Activated B cell treated with CpG ODN at 0.5 μM for 24 hours (primary cell): ENCODE measurements at regions of chr3 and their contacts with region 1.

Region 1: DNA sequence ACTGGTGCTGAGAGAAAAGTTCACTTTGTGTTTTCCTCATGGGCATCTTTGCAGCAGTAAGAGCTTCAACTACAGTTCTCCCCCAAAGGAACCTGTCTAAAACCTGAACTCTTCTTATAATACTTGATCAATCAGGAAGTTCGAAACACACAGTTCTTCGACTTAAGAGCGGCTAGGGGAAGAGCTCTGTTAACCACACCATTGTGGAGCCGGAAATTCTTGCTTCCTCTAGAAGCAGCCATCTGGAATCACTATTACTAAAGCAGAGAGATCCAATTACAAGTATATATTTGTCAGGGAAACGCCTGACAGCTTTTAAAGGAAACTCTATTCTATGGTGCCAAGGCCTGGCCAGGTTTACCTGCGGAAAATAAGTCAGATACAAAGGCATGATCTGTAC is 337.3 kb upstream of the CBLB start:
- DNase-seq: no peak
- ATAC-seq: peak; percentile 78
- H3K4me3 Mint-ChIP-seq: peak overlapping the region; percentile 25
- H3K27ac Mint-ChIP-seq: no peak overlapping the region
- H3K4me1 Mint-ChIP-seq: peaks cover 33% of the 10 kb centered on the region
- H3K27me3 Mint-ChIP-seq: no peaks in the 10 kb centered on the region
- CTCF ChIP-seq: no peak

Region 2: DNA sequence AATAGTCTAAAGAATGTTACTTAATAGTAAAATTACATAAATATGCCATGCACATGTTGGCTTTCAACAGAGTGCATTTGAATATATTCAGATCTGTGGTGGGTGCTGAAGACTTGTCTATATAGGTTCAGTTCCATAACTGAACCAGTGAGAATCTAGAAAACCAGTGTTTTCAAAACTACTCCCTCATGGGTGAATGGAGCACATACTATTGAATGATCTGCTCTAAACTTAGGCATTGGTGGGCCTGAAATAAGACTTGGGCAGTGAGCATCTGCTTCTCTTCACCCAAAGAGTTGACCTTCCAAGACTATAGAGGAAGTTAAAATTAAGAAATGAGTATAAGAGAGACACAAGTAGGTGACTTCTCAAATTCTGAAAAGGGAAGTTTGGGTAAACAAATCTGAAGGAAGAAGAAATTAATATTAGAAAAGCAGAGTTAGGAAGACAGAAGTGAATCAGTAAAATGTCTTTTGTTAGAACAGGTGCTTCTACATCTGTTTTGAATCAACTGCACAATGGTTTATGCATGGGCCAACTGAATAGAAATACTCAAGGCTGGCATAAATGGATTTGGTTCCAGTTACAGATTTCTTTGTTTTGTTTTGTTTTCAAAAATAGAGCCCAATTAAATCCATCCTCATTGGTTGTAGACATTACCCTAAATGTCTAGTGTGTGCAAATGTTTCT is 820.2 kb before region 1 on chr3:
- CTCF ChIA-PET with region 1: no interaction called
- POLR2A ChIA-PET with region 1: interaction called, 13 read pairs
- intact Hi-C with region 1: no loop called
- DNase-seq: no peak
- ATAC-seq: peak; percentile 83
- H3K4me3 Mint-ChIP-seq: peak overlapping the region; percentile 7
- H3K27ac Mint-ChIP-seq: peak overlapping the region; percentile 69
- H3K4me1 Mint-ChIP-seq: peaks cover 38% of the 10 kb centered on the region
- H3K27me3 Mint-ChIP-seq: no peaks in the 10 kb centered on the region
- CTCF ChIP-seq: no peak

Region 3: GRCh38 chr3:105505170-105505569 is 701.0 kb before region 1 on chr3:
- CTCF ChIA-PET with region 1: no interaction called
- POLR2A ChIA-PET with region 1: no interaction called
- intact Hi-C with region 1: no loop called
- DNase-seq: no peak
- ATAC-seq: no peak
- H3K4me3 Mint-ChIP-seq: no peak overlapping the region
- H3K27ac Mint-ChIP-seq: no peak overlapping the region
- H3K4me1 Mint-ChIP-seq: peaks cover 3% of the 10 kb centered on the region
- H3K27me3 Mint-ChIP-seq: no peaks in the 10 kb centered on the region
- CTCF ChIP-seq: no peak

Region 4: DNA sequence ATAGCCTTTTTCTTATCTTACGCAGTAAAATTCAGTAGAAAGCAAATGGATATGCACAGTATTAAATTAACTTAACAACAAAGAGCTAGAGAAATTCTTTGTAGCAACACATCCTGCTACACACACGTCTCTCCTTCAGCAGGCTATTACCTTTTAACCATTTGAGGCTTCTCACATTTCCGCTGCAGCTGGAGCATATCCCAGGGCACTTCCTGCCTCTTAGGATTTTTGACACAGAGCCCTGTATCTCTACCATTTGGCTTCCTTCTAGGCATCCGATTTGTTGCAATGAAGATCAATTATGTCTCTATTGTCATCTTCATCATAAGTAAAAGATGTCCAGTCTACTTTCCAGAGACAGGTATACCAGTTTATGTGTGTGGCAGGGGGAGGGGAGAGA is 44.9 kb before region 1 on chr3:
- CTCF ChIA-PET with region 1: no interaction called
- POLR2A ChIA-PET with region 1: no interaction called
- intact Hi-C with region 1: no loop called
- DNase-seq: no peak
- ATAC-seq: no peak
- H3K4me3 Mint-ChIP-seq: no peak overlapping the region
- H3K27ac Mint-ChIP-seq: no peak overlapping the region
- H3K4me1 Mint-ChIP-seq: no peaks in the 10 kb centered on the region
- H3K27me3 Mint-ChIP-seq: no peaks in the 10 kb centered on the region
- CTCF ChIP-seq: no peak

Region 5: GRCh38 chr3:106183762-106184391 is 22.3 kb before region 1 on chr3:
- CTCF ChIA-PET with region 1: no interaction called
- POLR2A ChIA-PET with region 1: interaction called, 3 read pairs
- intact Hi-C with region 1: loop called (anchors 2 kb)
- DNase-seq: no peak
- ATAC-seq: no peak
- H3K4me3 Mint-ChIP-seq: no peak overlapping the region
- H3K27ac Mint-ChIP-seq: peak overlapping the region; percentile 9
- H3K4me1 Mint-ChIP-seq: peaks cover 23% of the 10 kb centered on the region
- H3K27me3 Mint-ChIP-seq: peaks cover 4% of the 10 kb centered on the region
- CTCF ChIP-seq: no peak

Region 6: GRCh38 chr3:106191211-106191610 is 14.9 kb before region 1 on chr3:
- CTCF ChIA-PET with region 1: no interaction called
- POLR2A ChIA-PET with region 1: interaction called, 3 read pairs
- intact Hi-C with region 1: loop called (anchors 1 kb)
- DNase-seq: no peak
- ATAC-seq: no peak
- H3K4me3 Mint-ChIP-seq: no peak overlapping the region
- H3K27ac Mint-ChIP-seq: no peak overlapping the region
- H3K4me1 Mint-ChIP-seq: peaks cover 1% of the 10 kb centered on the region
- H3K27me3 Mint-ChIP-seq: peaks cover 4% of the 10 kb centered on the region
- CTCF ChIP-seq: no peak

Region 7: GRCh38 chr3:106299300-106300098 is 93.4 kb after region 1 on chr3:
- CTCF ChIA-PET with region 1: no interaction called
- POLR2A ChIA-PET with region 1: no interaction called
- intact Hi-C with region 1: no loop called
- DNase-seq: no peak
- ATAC-seq: peak; percentile 41
- H3K4me3 Mint-ChIP-seq: no peak overlapping the region
- H3K27ac Mint-ChIP-seq: no peak overlapping the region
- H3K4me1 Mint-ChIP-seq: peaks cover 25% of the 10 kb centered on the region
- H3K27me3 Mint-ChIP-seq: no peaks in the 10 kb centered on the region
- CTCF ChIP-seq: no peak